Posterior vena cava (tissue), 2 donors: ENCODE measurements at regions of chr5 and their contacts with region 1.

Region 1: DNA sequence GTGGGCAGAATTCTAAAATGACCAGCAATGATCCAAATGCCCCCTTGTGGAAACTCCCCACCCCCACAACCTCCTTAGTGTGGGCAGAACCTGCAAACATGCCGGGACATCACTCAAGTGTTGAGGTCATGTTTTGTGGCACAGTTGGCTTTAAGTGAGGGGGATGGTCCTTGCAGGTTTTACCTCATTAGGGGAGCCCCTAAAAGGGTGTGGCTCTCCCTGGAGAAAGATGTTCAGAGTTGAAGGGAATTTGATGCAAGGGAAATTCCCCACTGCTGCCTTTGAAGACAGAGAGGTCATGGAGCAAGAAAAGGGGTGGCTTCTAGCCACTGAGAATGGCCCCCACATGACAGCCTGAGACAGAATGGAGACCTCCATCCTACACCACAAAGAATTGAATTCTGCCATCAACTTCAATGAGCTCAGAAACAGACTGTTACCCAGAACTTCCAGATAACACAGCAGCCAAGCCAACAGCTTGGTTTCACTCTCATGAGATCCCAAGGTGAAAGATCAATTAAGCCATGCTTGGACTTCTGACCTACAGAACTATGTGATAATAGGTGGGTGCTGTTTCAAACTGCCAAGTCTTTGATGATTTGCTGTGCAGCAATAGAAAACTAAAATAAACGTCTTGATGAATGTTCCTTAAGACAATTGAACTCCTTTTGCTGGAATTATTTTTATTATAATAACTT is 103.4 kb downstream of the MED10 start:
- DNase-seq: no peak

Region 2: GRCh38 chr5:6675763-6676499 is 400.9 kb after region 1 on chr5:
- intact Hi-C with region 1: no loop called
- DNase-seq: no peak

Region 3: DNA sequence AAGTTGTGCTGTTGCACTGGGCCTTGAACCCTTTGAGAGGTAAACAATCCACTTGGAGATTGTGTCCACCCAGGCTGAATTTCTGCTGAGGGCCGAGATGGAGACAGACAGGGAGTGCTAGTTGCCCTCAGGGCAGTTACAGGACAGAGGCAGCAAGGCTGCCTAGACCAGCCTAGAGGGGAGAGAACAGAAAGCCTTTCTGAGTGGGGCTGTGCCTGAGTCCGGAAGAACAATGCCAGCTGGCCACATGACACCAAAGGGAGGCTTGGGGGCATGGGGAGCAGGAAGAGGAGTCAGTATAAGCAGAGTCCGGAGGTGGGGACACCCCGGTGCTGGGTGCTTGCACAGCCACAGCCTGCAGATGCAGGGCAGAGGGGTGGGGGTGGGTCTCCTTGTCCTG is 1430.2 kb after region 1 on chr5:
- intact Hi-C with region 1: loop called in 1 of 2 experiments (anchors 5 kb)
- DNase-seq: no peak